ENCODE measurements at regions of chr3 and their contacts with region 1.

Region 1: GRCh38 chr3:186108941-186109865 is at the start of gene ETV5:
- DNase-seq: peak; percentile 95
- ATAC-seq: peak; percentile 93
- H3K4me3 ChIP-seq: peak within 1 kb of the TSS; percentile 51 to 73 (median 63)
- H3K4me3 Mint-ChIP-seq: peak within 1 kb of the TSS; percentile 96
- H3K27ac ChIP-seq: no peak within 1 kb of the TSS
- H3K27ac Mint-ChIP-seq: peak within 1 kb of the TSS; percentile 71
- H3K4me1 ChIP-seq: peaks cover 32 to 41% of the 10 kb centered on the region in 2 donors
- H3K4me1 Mint-ChIP-seq: peaks cover 38% of the 10 kb centered on the region
- H3K27me3 ChIP-seq: peaks cover 2 to 79% (median 41%) of the 10 kb centered on the region in 4 experiments
- H3K27me3 Mint-ChIP-seq: peaks cover 51% of the 10 kb centered on the region
- CTCF ChIP-seq: no peak
- total RNA-seq, gene ETV5: 0.10 and 0.74 TPM in 2 replicates

Region 2: GRCh38 chr3:186079925-186080324 is 29.3 kb before region 1 on chr3:
- CTCF ChIA-PET with region 1: no interaction called
- POLR2A ChIA-PET with region 1: no interaction called
- intact Hi-C with region 1: no loop called
- DNase-seq: no peak
- ATAC-seq: no peak
- H3K4me3 ChIP-seq: no peak overlapping the region
- H3K4me3 Mint-ChIP-seq: no peak overlapping the region
- H3K27ac ChIP-seq: no peak overlapping the region
- H3K27ac Mint-ChIP-seq: no peak overlapping the region
- H3K4me1 ChIP-seq: no peaks in the 10 kb centered on the region
- H3K4me1 Mint-ChIP-seq: no peaks in the 10 kb centered on the region
- H3K27me3 ChIP-seq: no peaks in the 10 kb centered on the region
- H3K27me3 Mint-ChIP-seq: no peaks in the 10 kb centered on the region
- CTCF ChIP-seq: no peak

Region 3: GRCh38 chr3:186152889-186153292 is 43.7 kb after region 1 on chr3:
- CTCF ChIA-PET with region 1: no interaction called
- POLR2A ChIA-PET with region 1: no interaction called
- intact Hi-C with region 1: loop called (anchors 1 kb)
- DNase-seq: peak; percentile 88
- ATAC-seq: peak; percentile 90
- H3K4me3 ChIP-seq: peak overlapping the region in 3 of 5 experiments; percentile 29 to 34 (median 30)
- H3K4me3 Mint-ChIP-seq: peak overlapping the region; percentile 60
- H3K27ac ChIP-seq: peak overlapping the region; percentile 81 to 89
- H3K27ac Mint-ChIP-seq: peak overlapping the region; percentile 95
- H3K4me1 ChIP-seq: peaks cover 28 to 40% of the 10 kb centered on the region in 2 donors
- H3K4me1 Mint-ChIP-seq: peaks cover 35% of the 10 kb centered on the region
- H3K27me3 ChIP-seq: no peaks in the 10 kb centered on the region
- H3K27me3 Mint-ChIP-seq: no peaks in the 10 kb centered on the region
- CTCF ChIP-seq: no peak

Region 4: GRCh38 chr3:186361762-186362536 is 252.7 kb after region 1 on chr3 and contains the start of gene DGKG:
- CTCF ChIA-PET with region 1: no interaction called
- POLR2A ChIA-PET with region 1: no interaction called
- intact Hi-C with region 1: loop called (anchors 5 kb)
- DNase-seq: peak; percentile 76
- ATAC-seq: peak; percentile 81
- H3K4me3 ChIP-seq: peak within 1 kb of the TSS; percentile 52 to 65 (median 58)
- H3K4me3 Mint-ChIP-seq: peak within 1 kb of the TSS; percentile 87
- H3K27ac ChIP-seq: peak within 1 kb of the TSS in 1 of 2 donors; percentile 9
- H3K27ac Mint-ChIP-seq: peak within 1 kb of the TSS; percentile 67
- H3K4me1 ChIP-seq: peaks cover 19 to 22% of the 10 kb centered on the region in 2 donors
- H3K4me1 Mint-ChIP-seq: peaks cover 24% of the 10 kb centered on the region
- H3K27me3 ChIP-seq: peaks cover 0 to 34% (median 11%) of the 10 kb centered on the region in 4 experiments
- H3K27me3 Mint-ChIP-seq: peaks cover 7% of the 10 kb centered on the region
- CTCF ChIP-seq: no peak
- total RNA-seq, gene DGKG: 10.9 and 11.6 TPM in 2 replicates

Region 5: GRCh38 chr3:186383026-186383993 is 274.1 kb after region 1 on chr3:
- CTCF ChIA-PET with region 1: no interaction called
- POLR2A ChIA-PET with region 1: no interaction called
- intact Hi-C with region 1: no loop called
- DNase-seq: no peak
- ATAC-seq: no peak
- H3K4me3 ChIP-seq: no peak overlapping the region
- H3K4me3 Mint-ChIP-seq: no peak overlapping the region
- H3K27ac ChIP-seq: no peak overlapping the region
- H3K27ac Mint-ChIP-seq: no peak overlapping the region
- H3K4me1 ChIP-seq: peaks cover 7 to 9% of the 10 kb centered on the region in 2 donors
- H3K4me1 Mint-ChIP-seq: peaks cover 19% of the 10 kb centered on the region
- H3K27me3 ChIP-seq: peaks cover 0 to 3% (median 0%) of the 10 kb centered on the region in 4 experiments
- H3K27me3 Mint-ChIP-seq: no peaks in the 10 kb centered on the region
- CTCF ChIP-seq: no peak

Measured in B cell (primary cell).